Aorta (tissue), 5 donors: ENCODE measurements at regions of chrX and their contacts with region 1.

Region 1: DNA sequence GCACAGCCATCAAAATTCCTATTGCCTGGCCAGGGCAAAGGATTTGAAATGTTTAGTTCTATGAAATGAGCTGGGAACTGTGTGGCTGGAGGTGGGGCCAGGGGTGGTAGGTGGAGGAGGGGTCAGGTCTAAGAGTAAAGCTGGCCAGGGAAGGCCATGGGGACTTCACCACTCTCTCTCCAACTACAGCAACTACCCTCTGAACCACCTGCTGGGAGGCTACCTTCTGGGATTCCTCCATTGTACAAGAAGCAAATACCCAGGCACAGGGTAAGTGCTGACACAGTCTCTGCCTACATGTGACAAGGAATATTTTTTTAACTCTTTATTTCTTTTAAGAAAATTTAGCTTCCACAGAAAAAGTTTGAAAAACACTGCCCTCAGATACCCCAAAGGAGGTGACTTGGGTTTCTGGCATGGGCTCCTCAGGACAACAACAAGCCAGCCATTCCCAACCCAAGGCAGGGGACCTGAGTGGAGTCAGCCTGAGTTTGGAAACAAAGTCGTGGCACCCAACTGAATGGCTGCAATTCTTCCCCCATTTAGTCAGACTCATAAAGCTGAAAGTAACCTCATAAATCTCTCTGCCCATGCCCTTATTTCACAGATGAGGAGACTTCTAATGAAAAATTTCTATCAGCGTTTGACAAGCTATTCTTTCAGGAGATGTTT is 593.8 kb upstream of the DIPK2B start:
- DNase-seq: no peak
- ATAC-seq: no peak
- H3K4me3 ChIP-seq: no peak overlapping the region
- H3K27ac ChIP-seq: no peak overlapping the region
- H3K4me1 ChIP-seq: no peaks in the 10 kb centered on the region
- H3K27me3 ChIP-seq: no peaks in the 10 kb centered on the region

Region 2: DNA sequence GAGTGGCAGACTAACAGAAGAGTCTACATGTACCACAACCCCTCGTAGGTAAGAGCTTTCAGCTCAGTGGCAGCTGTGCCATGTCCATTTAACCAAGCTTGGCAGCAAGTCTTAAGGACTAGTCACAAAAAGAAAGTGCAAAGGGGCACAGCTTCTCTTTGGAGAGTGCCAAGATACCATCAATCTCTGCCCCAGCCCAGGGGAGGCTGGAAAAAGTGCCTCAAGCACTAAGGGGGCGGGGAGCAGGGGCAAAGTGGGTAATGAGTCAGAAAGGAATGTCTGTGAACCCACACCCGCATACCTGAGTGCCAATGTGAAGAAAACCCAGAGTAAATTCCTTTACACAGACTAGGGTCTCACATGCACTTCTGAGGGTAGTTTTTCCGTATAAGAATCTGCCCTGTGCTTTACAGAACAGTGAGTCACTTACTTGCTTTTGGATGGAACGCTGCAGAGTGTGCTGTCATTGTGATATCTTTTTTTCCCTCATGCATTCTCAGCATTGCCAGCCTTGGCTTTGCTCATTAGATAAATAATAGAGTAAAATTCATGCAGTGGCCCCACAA is 530.9 kb after region 1 on chrX:
- intact Hi-C with region 1: loop called in 1 of 2 experiments (anchors 5 kb)
- DNase-seq: peak in 1 of 2 donors; percentile 50
- ATAC-seq: peak; percentile 44
- H3K4me3 ChIP-seq: peak overlapping the region in 1 of 2 donors; percentile 26
- H3K27ac ChIP-seq: peak overlapping the region in 1 of 2 donors; percentile 84
- H3K4me1 ChIP-seq: no peaks in the 10 kb centered on the region
- H3K27me3 ChIP-seq: no peaks in the 10 kb centered on the region